B cell (primary cell): ENCODE measurements at regions of chr11 and their contacts with region 1.

Region 1: DNA sequence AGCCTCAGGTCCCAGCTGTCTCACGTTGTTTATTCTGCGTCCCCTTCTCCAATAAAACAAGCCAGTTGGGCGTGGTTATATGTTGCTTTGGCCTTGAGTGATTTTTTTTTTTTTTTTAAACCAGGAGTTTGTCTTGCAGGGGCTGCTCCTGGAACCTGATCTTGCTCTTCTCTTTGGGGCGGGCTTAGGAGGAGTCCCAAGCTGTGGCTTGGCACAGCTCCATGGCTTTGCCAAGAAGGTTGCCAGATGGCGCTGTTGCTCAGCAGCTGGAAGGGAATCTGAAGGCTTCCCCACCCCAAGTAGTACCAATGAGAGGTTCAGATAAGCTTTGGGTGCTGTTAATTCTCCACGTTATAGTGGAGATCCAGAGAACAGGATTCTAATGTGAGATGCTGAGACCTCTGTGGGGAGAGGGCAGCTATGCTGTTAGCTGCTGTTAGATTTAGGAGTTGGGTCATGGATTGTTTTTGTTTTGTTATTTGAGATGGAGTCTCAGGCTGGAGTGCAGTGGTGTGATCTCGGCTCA is 2.0 kb upstream of the FERMT3 start:
- DNase-seq: peak; percentile 89
- ATAC-seq: peak; percentile 48
- H3K4me3 ChIP-seq: no peak overlapping the region
- H3K4me3 Mint-ChIP-seq: peak overlapping the region; percentile 80
- H3K27ac ChIP-seq: peak overlapping the region in 1 of 2 donors; percentile 35
- H3K27ac Mint-ChIP-seq: peak overlapping the region; percentile 95
- H3K4me1 ChIP-seq: peaks cover 30 to 45% of the 10 kb centered on the region in 2 donors
- H3K4me1 Mint-ChIP-seq: peaks cover 44% of the 10 kb centered on the region
- H3K27me3 ChIP-seq: no peaks in the 10 kb centered on the region
- H3K27me3 Mint-ChIP-seq: no peaks in the 10 kb centered on the region
- CTCF ChIP-seq: peak; percentile 75

Region 2: GRCh38 chr11:62612366-62613290 is 1591.9 kb before region 1 on chr11 and contains the starts of genes EML3 and ROM1:
- CTCF ChIA-PET with region 1: no interaction called
- POLR2A ChIA-PET with region 1: no interaction called
- intact Hi-C with region 1: no loop called
- DNase-seq: peak; percentile 92
- ATAC-seq: peak; percentile 79
- H3K4me3 ChIP-seq: peak within 1 kb of the TSS; percentile 70 to 84 (median 75)
- H3K4me3 Mint-ChIP-seq: peak within 1 kb of the TSS; percentile 97
- H3K27ac ChIP-seq: peak within 1 kb of the TSS; percentile 76 to 96
- H3K27ac Mint-ChIP-seq: peak within 1 kb of the TSS; percentile 99
- H3K4me1 ChIP-seq: peaks cover 10 to 25% of the 10 kb centered on the region in 2 donors
- H3K4me1 Mint-ChIP-seq: peaks cover 25% of the 10 kb centered on the region
- H3K27me3 ChIP-seq: no peaks in the 10 kb centered on the region
- H3K27me3 Mint-ChIP-seq: no peaks in the 10 kb centered on the region
- CTCF ChIP-seq: peak; percentile 99
- total RNA-seq, gene EML3: 127 and 135 TPM in 2 replicates
- total RNA-seq, gene ROM1: 0.68 and 2.0 TPM in 2 replicates

Region 3: GRCh38 chr11:64185816-64186498 is 18.6 kb before region 1 on chr11 and contains the start of gene STIP1:
- CTCF ChIA-PET with region 1: interaction called, 53 read pairs
- POLR2A ChIA-PET with region 1: interaction called, 8 read pairs
- intact Hi-C with region 1: loop called (anchors 1 kb)
- DNase-seq: peak; percentile 100
- ATAC-seq: peak; percentile 85
- H3K4me3 ChIP-seq: peak within 1 kb of the TSS; percentile 16 to 95 (median 83)
- H3K4me3 Mint-ChIP-seq: no peak within 1 kb of the TSS
- H3K27ac ChIP-seq: peak within 1 kb of the TSS; percentile 59 to 86
- H3K27ac Mint-ChIP-seq: peak within 1 kb of the TSS; percentile 94
- H3K4me1 ChIP-seq: peaks cover 13 to 24% of the 10 kb centered on the region in 2 donors
- H3K4me1 Mint-ChIP-seq: peaks cover 40% of the 10 kb centered on the region
- H3K27me3 ChIP-seq: no peaks in the 10 kb centered on the region
- H3K27me3 Mint-ChIP-seq: no peaks in the 10 kb centered on the region
- CTCF ChIP-seq: peak; percentile 37
- total RNA-seq, gene STIP1: 78.7 and 87.8 TPM in 2 replicates

Region 4: DNA sequence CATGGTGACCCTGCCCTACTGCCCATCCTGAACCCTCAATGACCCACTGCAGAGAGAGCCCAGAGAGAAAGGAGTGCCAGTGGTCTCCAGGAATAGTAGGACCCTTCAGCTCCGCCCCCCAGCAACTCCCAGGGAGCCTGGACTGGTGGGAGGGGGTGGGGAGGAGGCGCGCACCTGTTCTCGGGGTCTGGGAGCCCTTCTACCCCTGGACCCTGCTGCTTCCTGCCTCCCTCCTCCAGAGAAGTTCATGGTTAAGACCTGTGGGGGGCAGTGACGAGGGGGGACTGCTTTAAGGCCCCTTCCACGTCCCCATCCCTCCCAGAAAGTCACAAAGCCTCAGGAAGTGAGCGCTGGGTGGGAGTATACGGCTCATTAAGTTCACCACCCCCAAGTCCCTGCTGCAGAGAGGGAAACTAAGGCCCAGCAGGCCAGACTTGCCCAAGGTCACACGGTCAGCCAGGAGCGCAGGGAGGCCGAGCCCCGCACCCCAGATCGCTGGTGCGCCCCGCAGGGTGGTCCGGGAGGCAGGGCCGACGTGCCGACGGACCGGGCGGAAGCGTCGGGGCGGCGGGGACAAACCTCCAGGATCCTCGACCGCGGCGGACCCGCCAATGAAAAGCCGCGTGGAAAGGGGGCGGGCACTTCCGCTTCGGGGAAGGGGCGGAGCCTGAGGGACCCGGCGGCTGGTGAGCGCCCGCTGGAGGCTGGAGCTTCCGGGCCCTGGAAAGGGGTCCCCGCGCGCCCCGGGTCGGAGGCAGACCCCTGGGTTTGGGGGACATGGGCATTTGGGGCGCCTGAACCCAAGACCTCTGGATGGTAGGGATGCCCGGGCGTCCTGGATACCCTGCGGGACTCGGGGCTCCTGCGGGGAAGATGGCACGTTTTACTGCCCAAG is 21.3 kb after region 1 on chr11 and contains the starts of genes NUDT22 and TRPT1:
- CTCF ChIA-PET with region 1: interaction called, 70 read pairs
- POLR2A ChIA-PET with region 1: interaction called, 78 read pairs
- intact Hi-C with region 1: loop called (anchors 1 kb)
- DNase-seq: peak; percentile 91
- ATAC-seq: peak; percentile 53
- H3K4me3 ChIP-seq: peak within 1 kb of the TSS; percentile 64 to 97 (median 92)
- H3K4me3 Mint-ChIP-seq: peak within 1 kb of the TSS; percentile 91
- H3K27ac ChIP-seq: peak within 1 kb of the TSS; percentile 82 to 86
- H3K27ac Mint-ChIP-seq: peak within 1 kb of the TSS; percentile 93
- H3K4me1 ChIP-seq: peaks cover 26 to 41% of the 10 kb centered on the region in 2 donors
- H3K4me1 Mint-ChIP-seq: peaks cover 43% of the 10 kb centered on the region
- H3K27me3 ChIP-seq: no peaks in the 10 kb centered on the region
- H3K27me3 Mint-ChIP-seq: no peaks in the 10 kb centered on the region
- CTCF ChIP-seq: peak; percentile 63
- total RNA-seq, gene NUDT22: 97.2 and 104 TPM in 2 replicates
- total RNA-seq, gene TRPT1: 59.6 and 62.0 TPM in 2 replicates

Region 5: DNA sequence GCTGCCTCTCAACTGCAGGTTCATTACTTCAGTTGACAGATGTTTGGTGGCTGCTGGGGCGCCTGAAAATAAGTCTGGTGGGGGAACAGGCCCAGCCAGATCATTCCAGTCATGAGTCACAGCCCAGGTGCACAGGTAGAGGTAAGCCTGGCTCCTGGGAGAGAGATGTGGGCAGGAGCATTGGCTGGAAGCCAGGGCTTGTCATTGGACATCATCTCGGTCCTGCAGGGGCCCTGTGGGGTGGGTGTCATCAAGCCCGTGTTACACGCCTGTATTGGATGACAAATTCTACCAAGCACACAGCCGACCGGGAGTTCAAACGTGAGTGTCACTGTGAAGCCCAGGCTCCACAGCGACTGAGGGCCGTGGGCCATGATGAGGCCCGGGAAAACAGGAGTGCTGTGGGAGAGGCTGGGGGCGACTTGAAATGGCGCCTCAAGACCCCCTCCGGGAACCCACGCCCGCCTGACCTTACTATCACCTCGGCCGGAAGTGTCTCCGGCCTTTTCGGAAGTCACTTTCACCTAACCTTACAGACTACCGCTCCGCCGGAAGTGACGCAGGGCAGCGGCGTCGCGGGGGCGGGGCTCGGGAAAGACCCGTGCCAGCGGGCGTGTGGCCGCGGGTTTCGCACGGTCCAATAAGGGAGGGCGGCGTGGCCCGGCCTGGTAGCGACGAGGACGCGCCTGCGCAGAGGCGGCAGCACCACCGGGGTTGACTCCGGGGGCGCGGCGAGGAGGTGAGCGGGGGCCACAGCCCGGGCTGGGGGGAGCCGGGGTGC is 36.1 kb after region 1 on chr11 and contains the start of gene FKBP2:
- CTCF ChIA-PET with region 1: interaction called, 141 read pairs
- POLR2A ChIA-PET with region 1: interaction called, 11 read pairs
- intact Hi-C with region 1: loop called (anchors 1 kb)
- DNase-seq: peak; percentile 99
- ATAC-seq: peak; percentile 58
- H3K4me3 ChIP-seq: peak within 1 kb of the TSS in 4 of 5 experiments; percentile 76 to 91 (median 83)
- H3K4me3 Mint-ChIP-seq: peak within 1 kb of the TSS; percentile 91
- H3K27ac ChIP-seq: peak within 1 kb of the TSS; percentile 98
- H3K27ac Mint-ChIP-seq: peak within 1 kb of the TSS; percentile 97
- H3K4me1 ChIP-seq: peaks cover 31 to 63% of the 10 kb centered on the region in 2 donors
- H3K4me1 Mint-ChIP-seq: peaks cover 62% of the 10 kb centered on the region
- H3K27me3 ChIP-seq: no peaks in the 10 kb centered on the region
- H3K27me3 Mint-ChIP-seq: no peaks in the 10 kb centered on the region
- CTCF ChIP-seq: no peak
- total RNA-seq, gene FKBP2: 23.7 and 25.7 TPM in 2 replicates

Region 6: GRCh38 chr11:64269380-64270234 is 65.1 kb after region 1 on chr11:
- CTCF ChIA-PET with region 1: interaction called, 38 read pairs
- POLR2A ChIA-PET with region 1: interaction called, 14 read pairs
- intact Hi-C with region 1: loop called (anchors 1 kb)
- DNase-seq: peak; percentile 99
- ATAC-seq: peak; percentile 73
- H3K4me3 ChIP-seq: peak overlapping the region; percentile 79 to 96 (median 87)
- H3K4me3 Mint-ChIP-seq: peak overlapping the region; percentile 100
- H3K27ac ChIP-seq: peak overlapping the region; percentile 89 to 91
- H3K27ac Mint-ChIP-seq: peak overlapping the region; percentile 99
- H3K4me1 ChIP-seq: peaks cover 14 to 29% of the 10 kb centered on the region in 2 donors
- H3K4me1 Mint-ChIP-seq: peaks cover 19% of the 10 kb centered on the region
- H3K27me3 ChIP-seq: no peaks in the 10 kb centered on the region
- H3K27me3 Mint-ChIP-seq: no peaks in the 10 kb centered on the region
- CTCF ChIP-seq: peak; percentile 37

Region 7: GRCh38 chr11:64652586-64653387 is 448.3 kb after region 1 on chr11:
- CTCF ChIA-PET with region 1: interaction called, 7 read pairs
- POLR2A ChIA-PET with region 1: interaction called, 3 read pairs
- intact Hi-C with region 1: loop called (anchors 10 kb)
- DNase-seq: peak; percentile 78
- ATAC-seq: peak; percentile 51
- H3K4me3 ChIP-seq: no peak overlapping the region
- H3K4me3 Mint-ChIP-seq: no peak overlapping the region
- H3K27ac ChIP-seq: no peak overlapping the region
- H3K27ac Mint-ChIP-seq: no peak overlapping the region
- H3K4me1 ChIP-seq: peaks cover 17 to 33% of the 10 kb centered on the region in 2 donors
- H3K4me1 Mint-ChIP-seq: peaks cover 28% of the 10 kb centered on the region
- H3K27me3 ChIP-seq: peaks cover 0 to 4% (median 0%) of the 10 kb centered on the region in 4 experiments
- H3K27me3 Mint-ChIP-seq: peaks cover 3% of the 10 kb centered on the region
- CTCF ChIP-seq: peak; percentile 70